Activated CD4-positive, alpha-beta T cell treated with anti-CD3 and anti-CD28 coated beads, Interleukin-2, amount 10 ng/mL, durations not matched to agents 24 days and 14 days (primary cell): ENCODE measurements at regions of chr1 and their contacts with region 1.

Region 1: DNA sequence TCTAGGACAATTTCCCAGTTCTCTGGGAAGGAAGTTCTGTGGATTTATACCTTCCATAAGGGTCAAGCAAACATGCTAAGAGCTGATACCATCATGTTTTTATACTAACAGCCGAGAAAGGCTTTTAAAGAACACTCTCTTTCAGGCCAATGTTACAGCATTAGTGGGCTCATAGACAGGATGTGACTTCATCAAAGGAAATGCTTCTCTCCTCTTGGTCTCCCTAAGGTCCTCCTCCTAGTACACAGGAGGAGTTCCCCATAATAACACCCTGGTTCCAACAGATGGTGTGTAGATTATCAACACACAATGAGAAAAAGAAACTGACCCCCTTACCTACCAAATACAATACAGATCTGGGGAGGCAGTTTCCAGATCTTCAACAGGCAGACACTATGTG is 26.7 kb upstream of the GLIS1 start:
- DNase-seq: peak; percentile 71
- H3K4me3 Mint-ChIP-seq: peak overlapping the region; percentile 72
- H3K27ac Mint-ChIP-seq: peak overlapping the region; percentile 82
- H3K4me1 Mint-ChIP-seq: peaks cover 27% of the 10 kb centered on the region
- H3K27me3 Mint-ChIP-seq: no peaks in the 10 kb centered on the region

Region 2: DNA sequence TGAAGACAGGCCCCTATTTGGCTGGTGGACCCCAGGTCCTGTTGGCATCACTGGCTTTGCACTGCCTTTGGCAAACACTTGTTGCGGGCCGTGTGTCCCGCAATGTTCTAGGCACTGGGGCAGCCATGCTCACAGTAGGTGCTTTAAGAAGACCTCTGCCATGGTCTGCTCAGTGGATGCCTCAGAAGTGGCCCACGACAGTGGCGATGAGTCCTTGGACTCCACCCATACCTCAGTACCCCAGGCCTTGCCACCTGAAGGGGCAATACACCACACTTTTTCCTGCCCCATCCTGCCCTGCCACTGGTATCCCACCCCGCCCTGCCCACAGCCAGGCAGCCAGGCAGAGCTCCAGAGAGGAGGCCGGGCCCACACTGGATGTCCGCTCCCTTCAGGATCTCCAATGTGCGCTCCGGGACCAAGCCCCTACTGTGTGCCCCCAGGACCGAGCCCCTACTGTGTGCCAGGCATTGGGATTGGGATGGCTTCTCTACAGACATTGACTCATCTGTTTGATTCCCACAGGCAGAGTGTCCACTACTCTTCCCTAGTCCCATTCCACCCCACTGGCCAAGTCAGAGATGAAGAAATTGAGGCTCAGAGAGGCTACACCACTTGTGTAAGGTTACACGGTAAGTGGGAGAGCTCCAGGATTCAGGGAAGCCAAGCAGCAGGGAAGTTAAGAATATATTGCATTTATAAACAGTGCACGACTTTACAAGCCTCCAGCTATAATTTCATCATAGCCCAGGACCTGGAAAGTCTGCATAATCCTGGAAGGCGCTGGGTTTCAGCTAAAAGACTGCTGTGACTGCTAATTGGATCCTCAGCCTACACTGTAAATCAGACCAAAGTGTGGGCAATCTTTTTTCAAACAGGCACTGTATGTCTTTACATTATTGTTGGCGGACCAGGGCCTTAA is 204.8 kb before region 1 on chr1:
- intact Hi-C with region 1: no loop called
- DNase-seq: no peak
- H3K4me3 Mint-ChIP-seq: no peak overlapping the region
- H3K27ac Mint-ChIP-seq: no peak overlapping the region
- H3K4me1 Mint-ChIP-seq: peaks cover 13% of the 10 kb centered on the region
- H3K27me3 Mint-ChIP-seq: peaks cover 25% of the 10 kb centered on the region

Region 3: GRCh38 chr1:53572065-53572814 is 193.4 kb before region 1 on chr1:
- intact Hi-C with region 1: no loop called
- DNase-seq: no peak
- H3K4me3 Mint-ChIP-seq: no peak overlapping the region
- H3K27ac Mint-ChIP-seq: no peak overlapping the region
- H3K4me1 Mint-ChIP-seq: no peaks in the 10 kb centered on the region
- H3K27me3 Mint-ChIP-seq: peaks cover 10% of the 10 kb centered on the region

Region 4: DNA sequence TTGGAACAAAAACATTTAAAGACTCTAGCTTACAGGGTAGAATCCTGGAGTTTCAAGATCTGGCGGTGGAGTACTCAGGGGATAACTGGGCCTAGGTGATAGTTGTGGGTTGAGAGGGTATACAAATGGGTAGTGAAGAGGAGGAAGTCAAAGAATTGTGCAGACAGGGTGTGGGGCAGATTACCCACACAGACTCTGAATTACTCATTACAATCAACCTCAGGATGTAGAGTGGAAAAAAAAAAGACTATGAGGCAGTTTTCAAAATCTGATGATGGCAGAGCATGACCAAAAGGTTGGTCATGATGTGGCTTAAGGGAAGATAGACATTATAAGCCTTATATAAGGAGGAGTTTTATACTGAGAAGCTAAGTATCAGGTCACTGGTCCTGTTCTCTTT is 17.4 kb after region 1 on chr1:
- intact Hi-C with region 1: loop called (anchors 1 kb)
- DNase-seq: peak; percentile 62
- H3K4me3 Mint-ChIP-seq: no peak overlapping the region
- H3K27ac Mint-ChIP-seq: peak overlapping the region; percentile 43
- H3K4me1 Mint-ChIP-seq: peaks cover 18% of the 10 kb centered on the region
- H3K27me3 Mint-ChIP-seq: no peaks in the 10 kb centered on the region

Region 5: DNA sequence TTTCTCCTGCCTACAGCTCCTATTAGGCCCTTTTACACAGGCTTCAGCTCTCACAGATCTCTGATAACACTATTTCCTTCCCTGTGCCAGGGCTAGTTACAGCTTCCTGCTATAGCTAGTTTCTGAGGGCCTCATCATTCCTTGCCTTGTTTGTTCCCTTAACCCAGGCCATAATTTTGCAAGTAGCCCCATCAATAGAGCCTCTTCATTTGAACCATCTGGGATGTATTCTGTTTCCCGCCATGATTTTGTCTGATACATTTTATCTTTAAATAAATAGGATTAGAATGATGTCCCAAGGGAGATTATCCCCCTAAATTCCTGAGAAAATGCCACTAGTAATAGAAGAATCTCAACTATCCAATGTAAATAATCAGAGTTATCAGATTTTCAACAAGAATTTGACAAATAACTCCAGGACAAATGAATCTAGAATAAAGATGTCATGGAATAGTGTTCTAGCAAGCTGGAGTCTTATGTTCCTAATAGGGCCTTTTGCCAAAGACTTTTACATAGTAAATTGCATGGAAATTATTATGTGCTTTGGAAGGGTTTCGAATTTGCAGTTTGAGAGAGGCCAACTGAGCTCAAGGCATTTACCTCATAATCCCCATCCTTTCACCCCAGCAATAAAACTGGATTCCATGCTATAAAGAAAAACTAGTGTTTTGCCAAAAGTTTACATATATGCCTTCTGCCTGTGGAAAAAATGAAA is 163.7 kb after region 1 on chr1:
- intact Hi-C with region 1: no loop called
- DNase-seq: no peak
- H3K4me3 Mint-ChIP-seq: no peak overlapping the region
- H3K27ac Mint-ChIP-seq: no peak overlapping the region
- H3K4me1 Mint-ChIP-seq: peaks cover 2% of the 10 kb centered on the region
- H3K27me3 Mint-ChIP-seq: no peaks in the 10 kb centered on the region